A549 (cell line): ENCODE measurements at regions of chr5 and their contacts with region 1.

Region 1: DNA sequence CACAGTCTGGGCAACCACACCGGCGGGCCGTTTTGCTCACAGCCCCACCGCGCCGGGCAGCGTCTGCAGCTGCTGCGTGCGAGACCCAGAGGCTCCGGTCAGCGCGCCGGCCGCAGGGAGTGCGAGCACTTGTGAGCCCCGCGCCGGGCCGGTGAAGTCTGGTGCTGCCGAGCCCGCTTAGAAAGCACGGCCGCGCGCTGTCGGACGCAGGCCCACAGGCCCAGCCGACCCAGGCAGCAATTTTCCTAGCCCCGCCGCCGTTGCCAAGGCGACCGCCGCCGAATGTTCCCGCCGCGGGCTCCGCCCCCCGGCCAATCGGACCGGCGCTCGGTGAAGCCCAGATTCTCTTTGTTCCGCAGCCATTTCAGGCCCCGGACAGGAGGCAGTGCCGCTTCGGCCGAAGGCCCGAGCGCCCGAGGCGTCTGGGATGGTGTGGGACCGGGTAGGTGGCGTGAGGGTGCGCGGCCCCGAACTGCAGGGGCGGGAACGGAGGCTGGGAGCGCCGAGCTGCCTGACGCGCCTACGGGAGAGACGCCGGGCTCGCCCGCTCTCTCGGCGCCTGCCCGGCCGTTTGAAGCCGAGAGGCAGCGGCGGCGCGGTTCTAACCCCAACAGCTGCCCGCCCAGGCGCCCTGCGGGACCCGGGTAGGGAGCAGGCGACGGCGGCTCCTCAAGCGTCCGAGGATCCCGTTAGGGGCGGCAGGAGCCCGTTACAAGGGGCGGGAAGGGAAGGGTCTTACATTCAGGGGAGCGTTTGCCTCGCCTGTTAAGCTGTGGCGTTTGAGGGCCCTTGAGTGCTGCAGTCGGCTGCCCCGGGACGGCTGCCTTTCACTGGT is at the start of gene TNPO1:
- DNase-seq: peak; percentile 76 to 92
- ATAC-seq: peak; percentile 89 to 93
- H3K4me3 ChIP-seq: peak within 1 kb of the TSS; percentile 82
- H3K27ac ChIP-seq: peak within 1 kb of the TSS; percentile 96 to 98
- H3K4me1 ChIP-seq: peaks cover 36% of the 10 kb centered on the region
- CTCF ChIP-seq: no peak
- EP300 ChIP-seq: no peak
- POLR2A ChIP-seq: peak; percentile 85
- RAD21 ChIP-seq: peak in 1 of 2 experiments; percentile 1; a peak in 1 of 5 replicates
- polyA plus RNA-seq, gene TNPO1: 286 and 350 TPM in 2 replicates

Region 2: GRCh38 chr5:72301557-72301956 is 515.0 kb before region 1 on chr5:
- CTCF ChIA-PET with region 1: no interaction called
- POLR2A ChIA-PET with region 1: no interaction called
- DNase-seq: no peak
- ATAC-seq: no peak
- H3K4me3 ChIP-seq: no peak overlapping the region
- H3K27ac ChIP-seq: no peak overlapping the region
- H3K4me1 ChIP-seq: peaks cover 10% of the 10 kb centered on the region; the same call in 2 of the 3 replicates
- CTCF ChIP-seq: no peak
- EP300 ChIP-seq: no peak
- POLR2A ChIP-seq: no peak
- RAD21 ChIP-seq: no peak

Region 3: DNA sequence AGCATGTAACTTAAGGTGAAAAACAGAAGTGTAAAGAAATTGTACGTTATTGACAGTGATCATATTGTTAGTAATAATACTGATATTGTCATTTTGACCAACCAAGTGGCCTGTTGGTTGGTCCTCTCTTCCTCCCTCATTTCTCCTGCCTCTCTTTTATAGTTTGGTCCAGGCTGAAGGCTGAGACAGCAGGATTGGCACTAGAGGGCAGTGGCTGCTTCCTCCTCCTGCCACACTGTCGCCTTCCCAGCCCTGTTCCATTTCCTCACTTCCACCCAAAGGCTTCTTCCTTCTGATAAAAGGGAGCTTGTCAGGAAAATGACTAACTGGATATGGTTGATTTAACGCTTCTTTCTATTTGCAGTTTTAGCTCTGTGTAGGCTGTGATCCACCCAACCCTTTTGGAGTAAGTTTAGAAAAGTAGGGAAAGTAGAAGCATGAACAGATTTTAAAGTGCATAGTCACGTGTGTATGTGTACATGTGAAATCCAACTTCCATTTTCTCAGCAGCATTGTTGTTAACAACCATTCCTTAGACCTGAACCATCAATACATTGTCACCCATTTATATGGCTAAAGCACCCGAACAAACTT is 460.7 kb before region 1 on chr5:
- CTCF ChIA-PET with region 1: interaction called, 11 read pairs
- POLR2A ChIA-PET with region 1: no interaction called
- DNase-seq: peak; percentile 26 to 50
- ATAC-seq: peak; percentile 89 to 94
- H3K4me3 ChIP-seq: no peak overlapping the region
- H3K27ac ChIP-seq: peak overlapping the region in 1 of 2 experiments; percentile 29; a peak in 2 of 6 replicates
- H3K4me1 ChIP-seq: peaks cover 15% of the 10 kb centered on the region
- CTCF ChIP-seq: peak; percentile 60
- EP300 ChIP-seq: no peak
- POLR2A ChIP-seq: no peak
- RAD21 ChIP-seq: peak; percentile 67 to 74

Region 4: GRCh38 chr5:72611118-72611730 is 205.3 kb before region 1 on chr5:
- CTCF ChIA-PET with region 1: interaction called, 60 read pairs
- POLR2A ChIA-PET with region 1: interaction called, 21 read pairs
- DNase-seq: peak; percentile 74 to 78
- ATAC-seq: peak; percentile 99 to 100
- H3K4me3 ChIP-seq: no peak overlapping the region
- H3K27ac ChIP-seq: 0 out of 6 replicates have a peak overlapping the region, but pooled peaks of 1 of the 2 experiments have one; percentile 24
- H3K4me1 ChIP-seq: 0 out of 3 replicates have a peak, but pooled peaks cover 9% of the 10 kb centered on the region
- CTCF ChIP-seq: peak; percentile 80
- EP300 ChIP-seq: no peak
- POLR2A ChIP-seq: no peak
- RAD21 ChIP-seq: peak; percentile 81 to 83

Region 5: DNA sequence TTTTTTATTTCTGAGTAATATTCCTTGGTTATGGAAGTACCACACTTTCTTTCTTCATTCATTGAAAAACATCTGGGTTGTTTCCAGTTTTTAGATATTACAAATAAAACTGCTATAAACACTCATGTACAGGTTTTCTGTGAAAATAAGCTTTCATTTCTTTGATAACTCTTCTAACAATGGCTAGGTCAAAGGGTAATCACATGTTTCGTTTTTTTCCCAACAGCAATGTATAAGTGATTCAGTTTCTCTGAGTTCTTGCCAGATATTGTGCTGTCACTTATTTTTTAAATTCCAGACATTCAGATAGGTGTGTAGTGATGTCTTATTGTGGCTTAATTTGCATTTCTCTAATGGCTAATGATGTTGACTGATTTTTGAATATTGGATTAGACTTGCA is 16.8 kb before region 1 on chr5:
- CTCF ChIA-PET with region 1: no interaction called
- POLR2A ChIA-PET with region 1: no interaction called
- DNase-seq: no peak
- ATAC-seq: no peak
- H3K4me3 ChIP-seq: no peak overlapping the region
- H3K27ac ChIP-seq: no peak overlapping the region
- H3K4me1 ChIP-seq: no peaks in the 10 kb centered on the region; the same call in 2 of the 3 replicates
- CTCF ChIP-seq: no peak
- EP300 ChIP-seq: no peak
- POLR2A ChIP-seq: no peak
- RAD21 ChIP-seq: no peak

Region 6: DNA sequence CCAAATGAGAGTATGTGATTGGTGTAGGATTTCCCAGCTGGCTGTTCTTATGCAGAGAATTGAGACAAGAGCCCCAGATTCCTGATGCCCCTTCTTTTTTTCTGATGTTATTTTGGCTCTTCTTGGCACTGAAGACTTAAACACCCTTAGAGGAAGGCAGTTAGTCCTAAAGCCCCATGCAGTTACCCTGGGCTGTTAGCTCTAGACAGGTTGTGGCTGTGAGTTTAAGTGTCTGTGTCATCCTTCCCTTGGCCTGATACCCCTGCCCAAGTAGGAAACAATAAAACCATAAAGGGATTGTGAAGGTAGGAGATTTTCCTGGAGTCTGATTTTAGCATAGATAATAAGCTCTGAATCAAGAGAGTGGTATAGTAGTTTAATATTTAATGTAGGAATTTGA is 13.2 kb after region 1 on chr5:
- CTCF ChIA-PET with region 1: interaction called, 30 read pairs
- POLR2A ChIA-PET with region 1: interaction called, 4 read pairs
- DNase-seq: no peak
- ATAC-seq: peak in 1 of 2 experiments; percentile 65; a peak in 3 of 6 replicates
- H3K4me3 ChIP-seq: no peak overlapping the region
- H3K27ac ChIP-seq: 0 out of 6 replicates have a peak overlapping the region, but pooled peaks of 1 of the 2 experiments have one; percentile 8
- H3K4me1 ChIP-seq: peaks cover 74% of the 10 kb centered on the region
- CTCF ChIP-seq: no peak
- EP300 ChIP-seq: no peak
- POLR2A ChIP-seq: no peak
- RAD21 ChIP-seq: no peak

Region 7: DNA sequence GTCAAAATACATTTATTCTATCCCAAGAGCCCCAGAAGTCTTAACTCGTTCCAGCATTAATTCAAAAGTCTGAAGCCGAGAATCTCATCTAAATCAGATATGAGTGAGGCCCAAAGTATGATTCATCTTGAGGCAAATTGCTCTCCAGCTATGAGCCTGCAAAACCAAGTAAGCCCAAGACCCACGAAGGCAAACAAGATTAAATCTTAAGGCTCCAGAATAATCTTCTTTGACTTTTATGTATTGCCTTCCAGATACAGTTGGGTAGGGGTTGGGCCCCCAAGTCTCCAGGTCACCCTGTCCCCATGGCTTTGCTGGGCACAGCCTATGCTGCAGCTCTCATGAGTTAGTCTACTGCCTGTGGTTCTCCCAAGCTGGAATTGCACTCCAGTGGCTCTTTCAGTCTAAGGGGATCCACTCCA is 19.2 kb after region 1 on chr5:
- CTCF ChIA-PET with region 1: interaction called, 30 read pairs
- POLR2A ChIA-PET with region 1: interaction called, 4 read pairs
- DNase-seq: no peak
- ATAC-seq: peak; percentile 7 to 38; a peak in 3 of 6 replicates
- H3K4me3 ChIP-seq: no peak overlapping the region
- H3K27ac ChIP-seq: peak overlapping the region; percentile 18 to 26; a peak in 2 of 6 replicates
- H3K4me1 ChIP-seq: peaks cover 87% of the 10 kb centered on the region
- CTCF ChIP-seq: no peak
- EP300 ChIP-seq: no peak
- POLR2A ChIP-seq: no peak
- RAD21 ChIP-seq: no peak

Region 8: GRCh38 chr5:72988769-72989168 is 172.2 kb after region 1 on chr5:
- CTCF ChIA-PET with region 1: no interaction called
- POLR2A ChIA-PET with region 1: no interaction called
- DNase-seq: no peak
- ATAC-seq: no peak
- H3K4me3 ChIP-seq: no peak overlapping the region
- H3K27ac ChIP-seq: no peak overlapping the region
- H3K4me1 ChIP-seq: no peaks in the 10 kb centered on the region
- CTCF ChIP-seq: no peak
- EP300 ChIP-seq: no peak
- POLR2A ChIP-seq: no peak
- RAD21 ChIP-seq: no peak

Region 9: GRCh38 chr5:73081093-73081492 is 264.6 kb after region 1 on chr5:
- CTCF ChIA-PET with region 1: no interaction called
- POLR2A ChIA-PET with region 1: no interaction called
- DNase-seq: no peak
- ATAC-seq: no peak
- H3K4me3 ChIP-seq: no peak overlapping the region
- H3K27ac ChIP-seq: no peak overlapping the region
- H3K4me1 ChIP-seq: no peaks in the 10 kb centered on the region
- CTCF ChIP-seq: no peak
- EP300 ChIP-seq: no peak
- POLR2A ChIP-seq: no peak
- RAD21 ChIP-seq: no peak